ENCODE measurements at regions of chr9 and their contacts with region 1.

Region 1: DNA sequence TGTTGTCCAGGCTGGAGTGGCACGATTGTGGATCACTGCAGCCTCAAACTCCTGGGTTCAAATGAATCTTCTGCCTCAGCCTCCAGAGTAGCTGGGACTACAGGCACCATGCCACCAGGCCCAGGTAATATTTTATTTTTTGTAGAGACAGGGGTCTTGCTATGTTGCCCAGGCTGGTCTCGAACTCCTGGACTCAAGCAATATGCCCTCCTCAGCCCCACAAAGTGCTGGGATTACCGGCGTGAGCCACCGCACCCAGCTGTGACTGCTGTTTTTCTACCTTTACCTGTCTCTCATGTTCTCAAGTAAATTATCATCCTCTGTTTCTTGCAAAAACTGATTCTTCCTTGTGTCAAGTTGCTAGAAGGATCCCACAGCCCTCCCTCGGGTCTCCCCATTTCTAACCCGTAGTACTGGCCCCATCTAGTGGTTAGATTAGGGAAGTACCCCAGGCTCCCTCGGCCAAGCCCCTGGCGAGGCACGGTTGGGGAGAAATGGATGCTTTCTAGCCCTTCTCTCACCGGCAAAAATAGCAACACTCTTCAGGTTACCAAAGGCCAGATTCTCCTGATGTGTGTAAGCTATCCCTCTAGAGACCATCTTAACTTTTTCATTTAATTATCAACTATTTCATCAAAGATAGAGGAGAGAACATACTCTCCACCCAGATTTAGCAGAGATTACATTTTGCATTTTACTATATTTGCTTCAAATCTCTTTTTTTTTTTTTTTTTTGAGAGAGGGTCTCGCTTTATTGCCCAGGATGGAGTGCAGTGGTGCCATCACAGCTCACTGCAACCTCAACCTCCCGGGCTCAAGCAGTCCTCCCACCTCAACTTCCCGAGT is 19.2 kb upstream of the TOR1B start:
- DNase-seq: peak; percentile 79
- H3K4me3 ChIP-seq: no peak overlapping the region
- H3K27ac ChIP-seq: no peak overlapping the region
- H3K4me1 ChIP-seq: no peaks in the 10 kb centered on the region
- H3K27me3 ChIP-seq: no peaks in the 10 kb centered on the region
- CTCF ChIP-seq: peak; percentile 91

Region 2: DNA sequence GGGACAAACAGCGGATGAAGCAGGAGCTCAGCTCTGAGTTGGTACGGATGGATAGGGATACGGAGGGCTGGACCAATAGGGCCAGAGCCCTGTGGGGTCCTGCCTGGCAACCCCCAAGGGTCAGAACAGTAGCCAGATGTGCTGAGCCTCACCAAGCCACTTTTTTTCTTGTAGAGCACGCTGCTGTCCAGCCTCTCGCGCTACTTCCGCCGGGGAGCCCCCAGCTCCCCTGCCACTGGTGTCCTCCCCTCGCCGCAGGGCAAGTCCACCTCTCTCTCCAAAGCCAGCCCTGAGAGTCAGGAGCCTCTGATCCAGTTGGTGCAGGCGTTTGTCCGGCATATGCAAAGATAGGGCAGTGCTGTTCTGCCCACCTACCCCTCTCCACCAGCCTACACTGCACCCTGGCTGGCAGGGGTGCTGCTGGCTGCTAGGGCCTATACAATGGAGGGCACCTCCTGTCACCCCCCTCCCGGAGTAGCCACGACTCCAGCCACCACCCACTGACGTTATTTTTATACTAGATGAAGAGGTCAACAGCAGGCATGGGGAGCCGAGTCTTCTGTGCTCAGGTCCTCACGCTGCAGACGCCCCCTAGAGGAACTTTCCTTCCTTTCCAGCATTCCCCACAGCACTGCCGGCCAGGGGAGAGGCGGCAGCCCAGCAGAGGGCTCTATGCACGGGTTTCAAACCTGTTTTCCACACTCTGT is 777.3 kb before region 1 on chr9:
- intact Hi-C with region 1: loop called (anchors 5 kb)
- DNase-seq: peak; percentile 71
- H3K4me3 ChIP-seq: no peak overlapping the region
- H3K27ac ChIP-seq: no peak overlapping the region
- H3K4me1 ChIP-seq: no peaks in the 10 kb centered on the region
- H3K27me3 ChIP-seq: no peaks in the 10 kb centered on the region
- CTCF ChIP-seq: peak; percentile 66

Region 3: GRCh38 chr9:129139993-129140396 is 643.7 kb before region 1 on chr9:
- intact Hi-C with region 1: loop called (anchors 5 kb)
- DNase-seq: peak; percentile 92
- H3K4me3 ChIP-seq: peak overlapping the region; percentile 29
- H3K27ac ChIP-seq: peak overlapping the region; percentile 98
- H3K4me1 ChIP-seq: peaks cover 25% of the 10 kb centered on the region
- H3K27me3 ChIP-seq: no peaks in the 10 kb centered on the region
- CTCF ChIP-seq: no peak

Region 4: GRCh38 chr9:129610473-129611301 is 173.1 kb before region 1 on chr9:
- intact Hi-C with region 1: no loop called
- DNase-seq: peak; percentile 83
- H3K4me3 ChIP-seq: peak overlapping the region; percentile 57
- H3K27ac ChIP-seq: peak overlapping the region; percentile 79
- H3K4me1 ChIP-seq: peaks cover 8% of the 10 kb centered on the region
- H3K27me3 ChIP-seq: no peaks in the 10 kb centered on the region
- CTCF ChIP-seq: peak; percentile 89

Region 5: GRCh38 chr9:129641746-129642513 is 141.8 kb before region 1 on chr9 and contains the start of gene ASB6:
- intact Hi-C with region 1: loop called (anchors 2 kb)
- DNase-seq: peak; percentile 99
- H3K4me3 ChIP-seq: peak within 1 kb of the TSS; percentile 99
- H3K27ac ChIP-seq: peak within 1 kb of the TSS; percentile 71
- H3K4me1 ChIP-seq: peaks cover 14% of the 10 kb centered on the region
- H3K27me3 ChIP-seq: no peaks in the 10 kb centered on the region
- CTCF ChIP-seq: peak; percentile 100
- total RNA-seq, gene ASB6: 15.8 to 18.5 TPM

Region 6: DNA sequence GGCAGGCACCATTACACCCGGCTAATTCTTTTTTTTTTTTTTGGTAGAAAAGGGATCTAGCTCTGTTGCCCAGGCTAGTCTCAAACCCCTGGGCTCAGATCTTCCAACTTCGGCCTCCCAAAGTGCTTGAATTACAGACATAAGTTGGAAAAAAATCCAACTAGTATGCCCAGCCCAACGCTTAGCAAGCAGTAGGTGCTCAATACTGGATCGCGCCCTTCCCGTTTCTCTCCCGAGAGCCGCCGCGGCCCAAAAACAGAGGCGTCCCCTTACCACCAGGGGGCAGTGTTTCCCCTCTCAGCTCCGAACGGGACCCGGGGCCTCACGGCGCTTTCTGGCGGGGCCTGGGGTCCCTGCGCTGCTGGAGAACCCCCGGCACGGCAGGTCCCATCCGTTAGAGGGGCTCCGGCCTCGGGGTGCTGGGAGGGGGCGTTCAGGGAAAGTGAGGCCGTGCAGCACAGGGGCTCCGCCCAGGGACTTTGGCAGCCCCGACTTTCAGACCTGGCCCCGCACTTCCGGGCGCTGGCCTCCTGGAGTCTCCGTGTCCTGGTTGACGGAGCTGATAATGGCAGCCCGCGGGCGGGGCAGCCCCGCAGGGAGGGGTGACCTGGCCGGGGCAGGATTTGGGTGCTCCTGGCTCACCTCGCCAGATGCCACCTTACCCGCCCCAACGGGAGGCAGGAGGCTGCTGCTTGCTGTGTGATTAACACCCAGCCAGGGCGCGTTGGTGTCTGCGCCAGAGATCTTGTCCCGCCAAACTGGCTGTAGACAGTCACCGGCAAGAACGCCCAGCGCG is 46.1 kb before region 1 on chr9:
- intact Hi-C with region 1: loop called (anchors 2 kb)
- DNase-seq: peak; percentile 92
- H3K4me3 ChIP-seq: peak overlapping the region; percentile 50
- H3K27ac ChIP-seq: peak overlapping the region; percentile 44
- H3K4me1 ChIP-seq: no peaks in the 10 kb centered on the region
- H3K27me3 ChIP-seq: no peaks in the 10 kb centered on the region
- CTCF ChIP-seq: peak; percentile 95

Region 7: GRCh38 chr9:129884220-129885017 is 100.7 kb after region 1 on chr9:
- intact Hi-C with region 1: no loop called
- DNase-seq: peak; percentile 96
- H3K4me3 ChIP-seq: peak overlapping the region; percentile 34
- H3K27ac ChIP-seq: peak overlapping the region; percentile 81
- H3K4me1 ChIP-seq: peaks cover 7% of the 10 kb centered on the region
- H3K27me3 ChIP-seq: no peaks in the 10 kb centered on the region
- CTCF ChIP-seq: no peak

Region 8: GRCh38 chr9:130186839-130187522 is 403.2 kb after region 1 on chr9:
- intact Hi-C with region 1: no loop called
- DNase-seq: peak; percentile 87
- H3K4me3 ChIP-seq: peak overlapping the region; percentile 16
- H3K27ac ChIP-seq: peak overlapping the region; percentile 15
- H3K4me1 ChIP-seq: peaks cover 5% of the 10 kb centered on the region
- H3K27me3 ChIP-seq: no peaks in the 10 kb centered on the region
- CTCF ChIP-seq: no peak

Measured in colonic mucosa (tissue), 4 donors.